ENCODE measurements at regions of chr4 and their contacts with region 1.

Region 1: DNA sequence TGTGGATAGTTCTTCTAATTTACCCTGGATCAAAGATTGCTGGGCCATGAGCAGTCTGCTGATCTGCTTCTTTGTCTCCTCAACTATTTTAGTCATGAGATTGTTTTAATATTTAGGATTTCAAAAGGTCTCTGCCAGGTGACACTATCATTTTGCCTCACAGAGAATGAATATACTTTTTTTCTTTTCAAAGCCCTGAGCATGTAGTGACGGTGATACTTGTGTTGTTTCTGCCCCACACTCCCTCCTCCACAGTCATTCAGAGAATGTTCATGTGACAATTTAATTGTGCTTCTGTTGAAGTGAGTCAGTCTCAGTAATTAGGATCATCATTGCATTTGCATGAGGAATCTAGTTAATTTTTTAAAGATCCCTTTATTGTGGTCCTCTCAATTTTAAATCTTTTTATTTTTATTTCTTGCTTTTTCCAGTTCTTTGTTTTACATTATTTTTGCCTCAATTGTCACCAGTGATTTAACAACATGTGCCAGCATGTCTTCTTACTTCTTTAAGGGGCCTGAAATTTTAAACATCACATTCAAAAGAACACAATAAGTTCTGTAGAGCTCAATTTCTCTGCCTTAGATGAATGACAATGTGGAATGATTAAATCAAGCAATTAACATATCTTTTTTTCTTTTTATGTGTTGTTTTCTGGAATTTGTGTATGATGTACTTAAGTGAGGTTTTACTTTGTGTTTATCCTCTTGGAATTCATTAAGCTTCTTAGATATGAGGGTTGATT is 12.3 kb downstream of the MMRN1 start:
- DNase-seq: no peak
- ATAC-seq: peak in 1 of 8 donors; percentile 60
- H3K4me3 ChIP-seq: no peak overlapping the region
- H3K27ac ChIP-seq: no peak overlapping the region
- H3K4me1 ChIP-seq: no peaks in the 10 kb centered on the region
- H3K27me3 ChIP-seq: no peaks in the 10 kb centered on the region
- CTCF ChIP-seq: no peak

Region 2: GRCh38 chr4:89158884-89159503 is 748.0 kb before region 1 on chr4:
- intact Hi-C with region 1: loop called in 1 of 10 experiments (anchors 5 kb)
- DNase-seq: no peak
- ATAC-seq: peak in 5 of 8 donors; percentile 35 to 72 (median 42)
- H3K4me3 ChIP-seq: no peak overlapping the region
- H3K27ac ChIP-seq: no peak overlapping the region
- H3K4me1 ChIP-seq: no peaks in the 10 kb centered on the region
- H3K27me3 ChIP-seq: no peaks in the 10 kb centered on the region
- CTCF ChIP-seq: peak; percentile 47 to 85 (median 78)

Region 3: GRCh38 chr4:89226665-89227574 is 680.0 kb before region 1 on chr4:
- intact Hi-C with region 1: loop called in 3 of 10 experiments (anchors 5 to 10 kb)
- DNase-seq: peak; percentile 26 to 87
- ATAC-seq: peak; percentile 84 to 98 (median 94)
- H3K4me3 ChIP-seq: no peak overlapping the region
- H3K27ac ChIP-seq: no peak overlapping the region
- H3K4me1 ChIP-seq: no peaks in the 10 kb centered on the region
- H3K27me3 ChIP-seq: no peaks in the 10 kb centered on the region
- CTCF ChIP-seq: peak; percentile 30 to 83 (median 78)

Region 4: DNA sequence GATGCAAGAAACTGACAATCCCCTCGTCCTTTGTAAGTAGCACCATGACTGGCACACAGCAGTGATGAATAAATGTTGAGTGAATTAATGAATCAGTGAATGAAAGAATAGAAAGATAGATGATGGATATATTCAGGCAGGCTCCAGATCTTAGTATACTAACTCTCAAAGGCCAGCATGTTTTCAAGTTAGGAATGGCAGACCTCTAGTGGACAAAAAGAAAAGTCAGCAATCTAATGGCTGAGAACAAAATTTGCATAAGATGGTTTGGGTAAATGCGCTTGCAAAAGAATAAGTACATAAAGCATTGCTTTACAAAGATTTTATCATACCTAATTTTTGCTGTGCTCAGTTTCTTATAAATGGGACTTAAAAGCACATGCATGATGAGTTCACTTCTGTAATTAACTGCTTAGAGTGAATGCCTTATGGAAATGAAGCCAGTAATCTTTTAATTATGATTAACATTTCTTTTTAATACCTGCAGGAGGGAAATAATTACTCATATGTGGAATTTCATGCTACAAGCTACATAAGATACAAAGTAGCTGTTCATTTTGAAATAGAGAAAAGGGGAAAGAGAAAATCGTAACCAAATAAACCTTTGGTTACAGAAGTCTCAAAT is 472.5 kb before region 1 on chr4:
- intact Hi-C with region 1: loop called in 1 of 10 experiments (anchors 5 kb)
- DNase-seq: no peak
- ATAC-seq: peak in 6 of 8 donors; percentile 43 to 79 (median 56)
- H3K4me3 ChIP-seq: no peak overlapping the region
- H3K27ac ChIP-seq: no peak overlapping the region
- H3K4me1 ChIP-seq: no peaks in the 10 kb centered on the region
- H3K27me3 ChIP-seq: no peaks in the 10 kb centered on the region
- CTCF ChIP-seq: peak; percentile 44 to 85 (median 81)

Region 5: GRCh38 chr4:89482248-89482647 is 424.7 kb before region 1 on chr4:
- intact Hi-C with region 1: loop called in 1 of 10 experiments (anchors 5 kb)
- DNase-seq: no peak
- ATAC-seq: peak in 2 of 8 donors; percentile 51 to 63
- H3K4me3 ChIP-seq: no peak overlapping the region
- H3K27ac ChIP-seq: no peak overlapping the region
- H3K4me1 ChIP-seq: no peaks in the 10 kb centered on the region
- H3K27me3 ChIP-seq: no peaks in the 10 kb centered on the region
- CTCF ChIP-seq: peak in 5 of 9 donors; percentile 11 to 39 (median 36)

Region 6: GRCh38 chr4:89598602-89599001 is 308.3 kb before region 1 on chr4:
- intact Hi-C with region 1: loop called in 1 of 10 experiments (anchors 10 kb)
- DNase-seq: no peak
- ATAC-seq: no peak
- H3K4me3 ChIP-seq: no peak overlapping the region
- H3K27ac ChIP-seq: no peak overlapping the region
- H3K4me1 ChIP-seq: no peaks in the 10 kb centered on the region
- H3K27me3 ChIP-seq: no peaks in the 10 kb centered on the region
- CTCF ChIP-seq: peak in 4 of 9 donors; percentile 7 to 41 (median 24)

Region 7: GRCh38 chr4:89657931-89658700 is 248.8 kb before region 1 on chr4:
- intact Hi-C with region 1: loop called in 2 of 10 experiments (anchors 10 kb)
- DNase-seq: no peak
- ATAC-seq: no peak
- H3K4me3 ChIP-seq: no peak overlapping the region
- H3K27ac ChIP-seq: no peak overlapping the region
- H3K4me1 ChIP-seq: peaks cover 0 to 5% (median 0%) of the 10 kb centered on the region in 9 donors
- H3K27me3 ChIP-seq: no peaks in the 10 kb centered on the region
- CTCF ChIP-seq: peak in 7 of 9 donors; percentile 15 to 61 (median 50)

Region 8: DNA sequence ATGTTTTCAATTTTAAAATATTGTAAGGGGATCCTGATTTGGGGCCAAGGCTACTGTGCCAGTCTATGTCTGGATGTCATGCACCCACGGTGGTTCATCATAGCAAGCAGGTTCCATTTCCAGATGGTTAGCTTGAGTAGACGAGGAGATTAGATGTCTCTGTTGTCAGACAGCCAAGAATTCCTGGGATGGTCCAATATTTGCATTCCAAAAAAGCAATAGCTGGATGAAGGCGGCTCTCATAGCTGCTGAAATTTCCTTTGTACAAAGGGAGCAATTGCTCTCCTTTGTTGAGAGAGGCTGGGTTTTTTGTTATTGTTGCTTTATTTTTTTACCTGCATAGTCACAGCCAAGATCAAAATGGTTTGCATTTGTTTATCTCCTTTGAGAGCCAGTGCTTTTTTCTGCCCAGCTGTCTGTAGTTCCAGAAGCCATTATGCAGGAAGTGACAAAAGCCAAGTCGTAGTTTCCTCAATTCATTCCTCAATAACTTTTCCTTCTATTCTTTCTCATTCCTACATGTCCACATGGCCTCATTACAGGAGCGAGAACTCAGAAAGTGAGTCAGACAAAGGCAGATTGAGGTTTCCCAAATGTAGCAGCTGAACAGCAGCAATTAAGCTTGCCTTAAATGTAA is 95.6 kb after region 1 on chr4:
- intact Hi-C with region 1: no loop called
- DNase-seq: no peak
- ATAC-seq: no peak
- H3K4me3 ChIP-seq: no peak overlapping the region
- H3K27ac ChIP-seq: no peak overlapping the region
- H3K4me1 ChIP-seq: no peaks in the 10 kb centered on the region
- H3K27me3 ChIP-seq: no peaks in the 10 kb centered on the region
- CTCF ChIP-seq: no peak